Heart right ventricle (tissue), 16 donors: ENCODE measurements at regions of chr12 and their contacts with region 1.

Region 1: GRCh38 chr12:32906407-32907165 is 10.0 kb upstream of the PKP2 start:
- DNase-seq: no peak
- ATAC-seq: no peak
- H3K4me3 ChIP-seq: no peak overlapping the region
- H3K27ac ChIP-seq: no peak overlapping the region
- H3K4me1 ChIP-seq: peaks cover 0 to 6% (median 0%) of the 10 kb centered on the region in 9 donors
- H3K27me3 ChIP-seq: no peaks in the 10 kb centered on the region
- CTCF ChIP-seq: no peak

Region 2: GRCh38 chr12:32780071-32780470 is 126.5 kb before region 1 on chr12:
- intact Hi-C with region 1: loop called in 1 of 10 experiments (anchors 10 kb)
- DNase-seq: no peak
- ATAC-seq: no peak
- H3K4me3 ChIP-seq: no peak overlapping the region
- H3K27ac ChIP-seq: no peak overlapping the region
- H3K4me1 ChIP-seq: no peaks in the 10 kb centered on the region
- H3K27me3 ChIP-seq: no peaks in the 10 kb centered on the region
- CTCF ChIP-seq: no peak

Region 3: DNA sequence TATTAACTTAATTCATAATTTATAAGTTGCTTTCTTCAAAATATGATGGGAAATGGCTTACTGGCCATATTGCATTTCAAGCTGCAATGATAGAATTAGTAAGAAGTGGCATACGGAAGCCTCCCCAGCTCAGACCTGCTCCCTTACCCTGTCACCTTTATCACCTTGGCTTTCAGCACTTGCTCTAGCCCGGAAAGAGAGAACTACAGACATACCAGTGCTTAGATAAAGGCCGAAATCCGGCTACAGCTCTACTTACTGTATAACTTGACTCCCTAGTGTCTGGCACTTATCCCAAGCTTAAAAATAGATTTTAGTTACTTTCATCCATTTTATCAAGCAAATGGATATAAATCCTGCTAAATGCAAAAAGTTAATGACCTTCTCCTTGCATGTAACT is 52.5 kb before region 1 on chr12:
- intact Hi-C with region 1: no loop called
- DNase-seq: no peak
- ATAC-seq: peak in 7 of 8 donors; percentile 73 to 93 (median 85)
- H3K4me3 ChIP-seq: no peak overlapping the region
- H3K27ac ChIP-seq: peak overlapping the region; percentile 21 to 78 (median 62)
- H3K4me1 ChIP-seq: peaks cover 0 to 67% (median 14%) of the 10 kb centered on the region in 9 donors
- H3K27me3 ChIP-seq: no peaks in the 10 kb centered on the region
- CTCF ChIP-seq: no peak

Region 4: GRCh38 chr12:32970465-32971110 is 64.0 kb after region 1 on chr12:
- intact Hi-C with region 1: no loop called
- DNase-seq: no peak
- ATAC-seq: no peak
- H3K4me3 ChIP-seq: no peak overlapping the region
- H3K27ac ChIP-seq: no peak overlapping the region
- H3K4me1 ChIP-seq: no peaks in the 10 kb centered on the region
- H3K27me3 ChIP-seq: peaks cover 0 to 4% (median 0%) of the 10 kb centered on the region in 7 donors
- CTCF ChIP-seq: no peak

Region 5: DNA sequence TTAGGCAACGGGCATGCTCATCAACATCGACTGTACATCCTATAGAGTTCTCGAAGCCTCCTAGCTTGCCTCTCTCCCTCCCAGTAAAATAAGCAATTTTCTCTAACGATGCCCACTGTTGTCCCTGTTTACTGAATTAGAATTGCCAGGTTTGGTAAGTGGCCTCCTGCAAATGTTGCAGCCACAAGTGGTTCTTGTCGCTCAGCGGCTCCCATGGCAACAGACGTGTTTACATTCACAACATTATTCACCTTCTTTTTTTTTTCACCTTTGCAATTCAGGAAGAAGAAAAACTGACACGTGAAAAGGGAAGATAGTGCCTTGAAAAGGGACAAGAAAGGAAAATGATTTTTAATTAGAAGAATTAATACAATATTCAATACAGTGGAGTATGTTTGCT is 90.9 kb after region 1 on chr12:
- intact Hi-C with region 1: no loop called
- DNase-seq: no peak
- ATAC-seq: no peak
- H3K4me3 ChIP-seq: no peak overlapping the region
- H3K27ac ChIP-seq: no peak overlapping the region
- H3K4me1 ChIP-seq: no peaks in the 10 kb centered on the region
- H3K27me3 ChIP-seq: peaks cover 0 to 3% (median 0%) of the 10 kb centered on the region in 7 donors
- CTCF ChIP-seq: no peak

Region 6: DNA sequence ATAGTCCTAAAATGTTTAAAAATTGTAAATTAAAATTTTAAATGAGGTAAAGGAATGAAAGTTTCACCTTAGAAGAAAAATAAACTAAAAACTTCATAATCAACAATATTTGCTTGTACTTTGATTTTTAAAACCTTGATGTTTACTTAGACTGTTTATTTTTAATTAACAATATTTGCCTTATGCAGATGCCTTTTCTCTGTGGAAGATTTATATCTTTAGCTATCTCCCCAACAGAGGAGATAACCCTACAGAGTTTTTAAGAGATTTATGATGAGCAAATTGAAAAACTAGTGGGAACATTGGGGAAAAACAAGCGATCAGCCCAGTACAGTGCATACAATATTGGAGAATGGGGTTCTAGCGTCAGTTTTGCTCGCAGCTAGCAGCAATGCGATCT is 117.2 kb after region 1 on chr12:
- intact Hi-C with region 1: no loop called
- DNase-seq: no peak
- ATAC-seq: no peak
- H3K4me3 ChIP-seq: no peak overlapping the region
- H3K27ac ChIP-seq: no peak overlapping the region
- H3K4me1 ChIP-seq: no peaks in the 10 kb centered on the region
- H3K27me3 ChIP-seq: no peaks in the 10 kb centered on the region
- CTCF ChIP-seq: no peak